ENCODE measurements at regions of chr14 and their contacts with region 1.

Region 1: GRCh38 chr14:33781265-33781664 is 169.6 kb downstream of the EGLN3 start:
- DNase-seq: no peak
- H3K4me3 ChIP-seq: no peak overlapping the region
- H3K27ac ChIP-seq: no peak overlapping the region
- H3K4me1 ChIP-seq: peaks cover 0 to 19% of the 10 kb centered on the region in 2 experiments; a peak in 3 of 4 replicates
- H3K27me3 ChIP-seq: no peaks in the 10 kb centered on the region
- CTCF ChIP-seq: no peak
- EP300 ChIP-seq: no peak
- RAD21 ChIP-seq: no peak

Region 2: DNA sequence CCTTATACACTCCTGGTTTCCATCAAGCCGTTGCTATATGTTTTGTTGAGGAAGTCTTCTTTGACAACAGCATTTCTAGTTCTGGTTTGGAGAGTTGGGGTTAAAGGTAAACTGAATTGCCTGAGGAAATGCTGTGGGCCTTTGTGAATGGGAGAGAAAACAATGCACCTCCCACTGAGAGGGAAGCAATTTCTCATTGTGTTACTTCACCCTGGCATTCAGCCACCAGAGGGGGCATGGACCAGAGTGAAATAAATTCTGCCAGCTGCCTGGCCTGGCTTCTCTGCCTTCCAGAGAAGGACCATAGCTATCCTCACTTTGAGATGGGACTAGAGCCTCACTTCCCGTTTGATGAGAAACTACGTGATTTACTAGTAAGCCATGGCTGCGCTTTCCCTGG is 305.6 kb before region 1 on chr14:
- CTCF ChIA-PET with region 1: interaction called, 13 read pairs
- POLR2A ChIA-PET with region 1: no interaction called
- DNase-seq: peak; percentile 56
- H3K4me3 ChIP-seq: no peak overlapping the region
- H3K27ac ChIP-seq: peak overlapping the region; percentile 31 to 55; a peak in 2 of 4 replicates
- H3K4me1 ChIP-seq: peaks cover 11 to 16% of the 10 kb centered on the region in 2 experiments; a peak in 3 of 4 replicates
- H3K27me3 ChIP-seq: no peaks in the 10 kb centered on the region
- CTCF ChIP-seq: peak; percentile 67
- EP300 ChIP-seq: no peak
- RAD21 ChIP-seq: peak; percentile 80

Measured in SK-N-SH (cell line).